Activated CD4-positive, alpha-beta T cell treated with anti-CD3 and anti-CD28 coated beads for 36 hours (primary cell): ENCODE measurements at regions of chr15 and their contacts with region 1.

Region 1: DNA sequence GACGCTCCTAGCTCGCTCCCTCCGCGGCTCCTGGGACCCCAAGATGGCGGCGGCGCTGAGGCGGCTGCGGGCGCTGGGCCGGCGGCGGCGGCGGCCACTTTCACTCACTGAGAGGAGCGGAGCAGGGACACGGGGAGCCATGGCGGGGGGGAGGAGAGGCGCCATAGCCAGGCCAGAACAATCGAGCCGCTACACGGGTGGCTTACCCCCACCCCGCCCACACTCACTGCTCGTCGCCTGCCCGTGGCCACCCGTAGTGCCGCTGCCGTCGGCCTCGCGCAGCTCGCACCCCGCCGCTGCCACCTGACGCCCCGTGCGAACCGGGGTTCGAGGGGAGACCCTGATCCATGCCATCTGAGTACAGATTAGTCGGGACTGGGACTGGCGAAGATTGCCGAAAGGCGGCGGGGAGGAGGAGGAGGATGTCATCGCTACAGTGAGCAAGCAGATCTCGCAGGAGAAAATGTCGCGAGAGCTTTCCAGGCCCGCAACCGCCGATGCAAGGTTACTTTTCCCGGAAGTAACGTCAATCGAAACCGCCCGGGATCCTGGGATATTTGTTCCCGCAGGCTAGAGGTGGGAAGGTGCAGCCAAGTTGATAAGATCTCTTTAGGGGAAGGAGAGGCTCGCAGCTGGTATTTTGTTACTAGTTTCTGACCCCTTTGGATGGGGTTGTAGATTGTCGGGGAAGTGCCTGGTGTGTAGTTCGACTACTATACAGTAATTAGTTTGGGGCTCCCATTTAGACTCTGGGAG is at the start of gene INO80:
- DNase-seq: peak; percentile 99
- ATAC-seq: peak; percentile 85
- H3K4me3 Mint-ChIP-seq: peak within 1 kb of the TSS; percentile 80
- H3K27ac Mint-ChIP-seq: peak within 1 kb of the TSS; percentile 98
- H3K4me1 Mint-ChIP-seq: peaks cover 24% of the 10 kb centered on the region
- H3K27me3 Mint-ChIP-seq: no peaks in the 10 kb centered on the region
- total RNA-seq, gene INO80: 22.2 to 25.1 TPM

Region 2: DNA sequence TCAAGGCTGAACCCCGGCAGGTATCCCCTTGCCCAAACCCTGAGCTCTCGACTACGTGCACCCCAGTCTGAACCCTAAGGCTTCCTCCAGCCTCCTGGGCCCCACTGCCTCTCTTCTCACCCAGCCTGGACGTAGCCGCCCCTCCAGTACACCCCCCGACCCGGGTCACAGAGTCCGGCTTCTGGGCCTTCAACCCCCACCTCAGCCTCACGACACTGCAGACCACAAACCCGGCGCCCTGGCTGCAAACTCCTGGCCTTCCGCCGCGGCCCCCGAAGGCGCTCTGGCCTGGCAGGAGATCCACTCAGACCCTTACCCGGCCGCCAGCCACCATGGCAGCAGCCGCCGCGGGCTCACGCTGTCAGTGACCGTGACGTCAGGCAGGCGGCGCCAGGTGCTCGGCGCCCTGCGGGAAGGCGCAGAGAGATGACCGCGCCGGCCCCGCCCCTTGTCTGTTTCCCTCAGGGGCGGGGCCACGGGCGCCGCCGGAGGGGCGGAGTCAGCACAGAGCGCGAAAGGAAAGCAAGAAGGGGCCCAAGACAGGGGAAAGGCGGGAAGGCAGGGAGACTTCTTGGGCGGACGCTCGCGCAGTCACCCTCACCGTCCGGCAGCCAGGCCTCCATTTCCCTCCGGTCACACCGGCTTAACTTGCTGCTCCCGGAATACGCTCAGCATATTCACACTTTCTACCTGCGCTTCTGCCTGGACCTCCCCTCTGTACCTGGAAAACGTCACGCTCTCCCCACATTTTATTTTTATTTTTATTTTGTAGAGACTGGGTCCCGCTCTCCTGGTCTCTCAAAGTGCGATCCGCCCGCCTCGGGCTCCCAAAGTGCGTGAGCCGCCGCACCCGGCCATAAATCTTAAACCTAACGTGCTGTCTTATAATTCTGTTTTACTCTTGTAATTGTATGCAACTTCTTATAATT is 361.1 kb before region 1 on chr15 and contains the start of gene RMDN3:
- CTCF ChIA-PET with region 1: no interaction called
- POLR2A ChIA-PET with region 1: no interaction called
- intact Hi-C with region 1: loop called in 1 of 2 experiments (anchors 2 kb)
- DNase-seq: peak; percentile 97
- ATAC-seq: peak; percentile 92
- H3K4me3 Mint-ChIP-seq: peak within 1 kb of the TSS; percentile 91
- H3K27ac Mint-ChIP-seq: peak within 1 kb of the TSS; percentile 99
- H3K4me1 Mint-ChIP-seq: peaks cover 27% of the 10 kb centered on the region
- H3K27me3 Mint-ChIP-seq: no peaks in the 10 kb centered on the region
- total RNA-seq, gene RMDN3: 12.3 to 18.8 TPM

Region 3: DNA sequence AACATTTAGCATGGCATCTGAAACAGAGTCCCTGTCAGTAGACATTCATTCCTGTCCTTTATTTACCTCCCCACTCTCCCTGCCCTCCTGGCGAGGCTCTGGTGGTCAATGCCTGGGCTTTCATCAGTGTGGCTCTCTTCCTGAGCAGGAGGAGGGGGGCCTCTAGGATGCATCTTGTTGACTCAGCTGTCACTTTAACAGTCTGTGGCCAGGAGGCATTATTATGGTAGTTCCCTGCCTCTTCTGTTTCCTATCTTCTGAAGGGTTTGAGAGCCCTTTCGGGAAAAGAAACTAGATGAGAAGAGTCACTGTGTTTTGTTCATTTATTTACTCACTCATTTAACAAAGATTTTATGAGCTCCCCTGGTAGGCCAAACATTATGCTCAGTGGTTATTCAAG is 285.4 kb before region 1 on chr15:
- CTCF ChIA-PET with region 1: no interaction called
- POLR2A ChIA-PET with region 1: no interaction called
- intact Hi-C with region 1: no loop called
- DNase-seq: no peak
- ATAC-seq: no peak
- H3K4me3 Mint-ChIP-seq: no peak overlapping the region
- H3K27ac Mint-ChIP-seq: no peak overlapping the region
- H3K4me1 Mint-ChIP-seq: no peaks in the 10 kb centered on the region
- H3K27me3 Mint-ChIP-seq: no peaks in the 10 kb centered on the region

Region 4: GRCh38 chr15:40906091-40906990 is 210.0 kb before region 1 on chr15:
- CTCF ChIA-PET with region 1: no interaction called
- POLR2A ChIA-PET with region 1: no interaction called
- intact Hi-C with region 1: loop called (anchors 1 to 5 kb)
- DNase-seq: peak; percentile 91
- ATAC-seq: peak; percentile 81
- H3K4me3 Mint-ChIP-seq: peak overlapping the region; percentile 69
- H3K27ac Mint-ChIP-seq: peak overlapping the region; percentile 82
- H3K4me1 Mint-ChIP-seq: peaks cover 27% of the 10 kb centered on the region
- H3K27me3 Mint-ChIP-seq: no peaks in the 10 kb centered on the region

Region 5: DNA sequence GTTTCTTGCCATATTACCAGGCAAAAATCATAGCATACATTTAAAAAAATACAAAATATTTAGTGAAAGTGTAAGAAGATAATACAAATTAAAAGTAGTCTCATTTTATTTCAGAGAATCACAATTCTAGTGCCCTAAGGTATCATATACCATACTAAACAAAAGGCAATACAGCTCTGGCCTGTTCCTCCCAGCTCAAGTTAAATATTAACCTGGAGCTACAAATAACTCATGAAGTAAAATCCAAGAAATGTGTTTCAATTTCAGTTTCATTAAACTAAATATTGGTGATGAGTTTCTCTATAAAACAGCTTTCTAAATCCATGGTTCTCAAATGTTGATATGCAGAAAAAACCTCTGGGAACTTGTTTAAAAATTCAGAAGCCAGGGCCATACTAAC is 67.9 kb before region 1 on chr15:
- CTCF ChIA-PET with region 1: no interaction called
- POLR2A ChIA-PET with region 1: no interaction called
- intact Hi-C with region 1: no loop called
- DNase-seq: no peak
- ATAC-seq: no peak
- H3K4me3 Mint-ChIP-seq: no peak overlapping the region
- H3K27ac Mint-ChIP-seq: no peak overlapping the region
- H3K4me1 Mint-ChIP-seq: no peaks in the 10 kb centered on the region
- H3K27me3 Mint-ChIP-seq: no peaks in the 10 kb centered on the region

Region 6: DNA sequence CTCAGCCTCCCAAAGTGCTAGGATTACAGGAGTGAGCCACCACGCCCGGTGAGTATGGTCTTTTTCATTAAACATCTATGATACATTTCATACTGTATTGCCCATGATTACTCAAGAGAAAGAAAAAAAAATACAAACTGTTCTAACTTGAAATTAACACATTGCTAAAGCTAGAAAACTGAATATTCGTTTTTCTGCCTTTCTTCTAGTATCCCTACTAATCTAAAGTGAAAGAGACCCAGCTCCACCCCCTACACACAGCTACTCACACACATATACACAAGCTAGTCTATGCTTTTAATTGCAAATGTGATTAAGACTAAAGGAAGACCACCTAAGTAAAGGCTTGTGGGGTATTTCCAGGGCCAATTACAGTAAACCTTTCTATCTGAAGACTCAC is 43.3 kb before region 1 on chr15:
- CTCF ChIA-PET with region 1: no interaction called
- POLR2A ChIA-PET with region 1: no interaction called
- intact Hi-C with region 1: no loop called
- DNase-seq: no peak
- ATAC-seq: no peak
- H3K4me3 Mint-ChIP-seq: no peak overlapping the region
- H3K27ac Mint-ChIP-seq: no peak overlapping the region
- H3K4me1 Mint-ChIP-seq: no peaks in the 10 kb centered on the region
- H3K27me3 Mint-ChIP-seq: no peaks in the 10 kb centered on the region

Region 7: GRCh38 chr15:41169086-41169485 is 52.8 kb after region 1 on chr15:
- CTCF ChIA-PET with region 1: no interaction called
- POLR2A ChIA-PET with region 1: no interaction called
- intact Hi-C with region 1: no loop called
- DNase-seq: no peak
- ATAC-seq: no peak
- H3K4me3 Mint-ChIP-seq: no peak overlapping the region
- H3K27ac Mint-ChIP-seq: no peak overlapping the region
- H3K4me1 Mint-ChIP-seq: no peaks in the 10 kb centered on the region
- H3K27me3 Mint-ChIP-seq: peaks cover 2% of the 10 kb centered on the region

Region 8: DNA sequence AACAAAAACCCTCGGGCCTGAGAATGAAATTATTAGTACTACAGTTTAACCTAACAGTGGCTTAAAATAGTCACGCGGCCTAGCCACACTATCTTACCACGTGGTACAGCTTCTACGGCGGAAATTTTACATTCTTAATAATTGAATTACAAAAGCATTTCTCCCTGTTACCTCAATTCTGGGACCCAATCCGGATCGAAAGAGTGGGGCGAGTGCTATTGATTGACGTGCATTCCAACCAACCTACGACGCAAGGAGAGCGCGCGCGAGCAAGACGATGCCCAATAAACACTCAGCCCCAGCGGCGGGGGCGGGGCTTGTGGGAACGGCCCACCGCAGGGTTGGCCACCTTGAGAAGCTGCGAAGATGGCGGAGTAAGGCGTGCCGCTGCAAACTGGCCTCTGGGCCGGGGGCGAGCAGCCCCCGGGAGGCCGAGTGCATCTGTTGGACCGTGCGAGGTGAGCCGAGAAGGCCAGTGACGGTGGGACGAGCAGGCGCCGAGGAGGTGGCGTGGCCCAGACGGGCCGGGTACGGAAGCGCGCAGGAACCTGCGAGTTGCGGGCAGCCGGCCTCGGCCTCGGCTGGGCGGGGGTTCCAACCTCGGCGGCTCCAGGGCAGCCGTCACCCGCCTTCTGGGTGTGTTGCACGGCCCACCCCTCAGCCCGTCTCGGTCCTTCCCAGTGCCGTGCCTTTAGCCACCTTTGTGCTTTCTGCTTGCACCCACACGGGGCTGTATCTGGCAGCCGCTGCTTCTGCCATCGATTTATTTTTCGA is 167.5 kb after region 1 on chr15:
- CTCF ChIA-PET with region 1: no interaction called
- POLR2A ChIA-PET with region 1: no interaction called
- intact Hi-C with region 1: loop called (anchors 1 to 10 kb)
- DNase-seq: peak; percentile 98
- ATAC-seq: peak; percentile 98
- H3K4me3 Mint-ChIP-seq: peak overlapping the region; percentile 90
- H3K27ac Mint-ChIP-seq: peak overlapping the region; percentile 95
- H3K4me1 Mint-ChIP-seq: peaks cover 42% of the 10 kb centered on the region
- H3K27me3 Mint-ChIP-seq: no peaks in the 10 kb centered on the region

Region 9: GRCh38 chr15:41493205-41493901 is 377.1 kb after region 1 on chr15 and contains the start of gene ITPKA:
- CTCF ChIA-PET with region 1: no interaction called
- POLR2A ChIA-PET with region 1: no interaction called
- intact Hi-C with region 1: loop called in 1 of 2 experiments (anchors 1 kb)
- DNase-seq: peak; percentile 97
- ATAC-seq: peak; percentile 85
- H3K4me3 Mint-ChIP-seq: peak within 1 kb of the TSS; percentile 58
- H3K27ac Mint-ChIP-seq: peak within 1 kb of the TSS; percentile 37
- H3K4me1 Mint-ChIP-seq: peaks cover 38% of the 10 kb centered on the region
- H3K27me3 Mint-ChIP-seq: peaks cover 40% of the 10 kb centered on the region
- total RNA-seq, gene ITPKA: 2.5 to 4.2 TPM

Region 10: DNA sequence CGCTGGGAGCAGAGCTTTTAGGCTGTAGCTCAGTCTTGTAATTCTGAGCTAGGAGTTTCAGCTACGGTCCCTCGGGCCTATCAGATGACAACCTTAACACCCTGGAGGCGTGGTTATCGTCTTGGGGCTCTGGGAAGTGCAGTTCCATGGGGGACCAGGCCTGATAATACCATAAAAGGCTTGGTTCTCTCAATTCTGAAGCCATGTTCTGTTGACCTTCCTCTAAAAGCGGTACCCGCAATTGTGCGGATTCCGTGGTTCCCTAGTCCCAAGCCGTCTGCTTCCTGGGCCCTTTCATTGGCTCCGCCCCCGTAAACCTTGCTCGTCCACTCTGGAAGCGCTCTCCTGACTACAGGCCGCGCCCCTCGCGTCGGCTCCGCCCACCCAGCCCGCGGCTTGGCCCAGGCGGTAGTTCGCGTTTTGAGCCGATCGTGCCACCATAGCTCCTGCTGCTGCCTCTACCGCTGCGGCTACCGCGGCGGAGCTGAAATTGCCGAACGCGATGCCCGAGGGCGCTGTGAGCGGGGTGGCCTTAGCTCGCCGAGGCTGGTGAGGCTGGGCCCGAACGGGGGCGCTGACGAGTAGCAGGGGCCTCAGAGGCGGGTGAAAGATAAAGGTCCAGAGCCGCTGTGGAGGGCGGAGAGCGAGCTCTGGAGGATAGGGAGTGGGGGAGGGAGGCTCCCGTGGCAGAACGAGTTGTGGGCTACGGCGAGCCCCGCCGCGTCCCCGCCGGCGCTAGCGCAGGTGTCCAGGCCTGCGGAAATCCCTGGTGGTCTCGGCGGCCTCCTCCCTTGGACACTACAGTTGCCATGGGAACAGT is 658.0 kb after region 1 on chr15 and contains the start of gene MAPKBP1:
- CTCF ChIA-PET with region 1: no interaction called
- POLR2A ChIA-PET with region 1: no interaction called
- intact Hi-C with region 1: loop called in 1 of 2 experiments (anchors 1 kb)
- DNase-seq: peak; percentile 99
- ATAC-seq: peak; percentile 88
- H3K4me3 Mint-ChIP-seq: peak within 1 kb of the TSS; percentile 90
- H3K27ac Mint-ChIP-seq: peak within 1 kb of the TSS; percentile 84
- H3K4me1 Mint-ChIP-seq: peaks cover 56% of the 10 kb centered on the region
- H3K27me3 Mint-ChIP-seq: no peaks in the 10 kb centered on the region
- total RNA-seq, gene MAPKBP1: 16.1 to 19.0 TPM